CD4-positive, alpha-beta T cell (primary cell): ENCODE measurements at regions of chr17 and their contacts with region 1.

Region 1: DNA sequence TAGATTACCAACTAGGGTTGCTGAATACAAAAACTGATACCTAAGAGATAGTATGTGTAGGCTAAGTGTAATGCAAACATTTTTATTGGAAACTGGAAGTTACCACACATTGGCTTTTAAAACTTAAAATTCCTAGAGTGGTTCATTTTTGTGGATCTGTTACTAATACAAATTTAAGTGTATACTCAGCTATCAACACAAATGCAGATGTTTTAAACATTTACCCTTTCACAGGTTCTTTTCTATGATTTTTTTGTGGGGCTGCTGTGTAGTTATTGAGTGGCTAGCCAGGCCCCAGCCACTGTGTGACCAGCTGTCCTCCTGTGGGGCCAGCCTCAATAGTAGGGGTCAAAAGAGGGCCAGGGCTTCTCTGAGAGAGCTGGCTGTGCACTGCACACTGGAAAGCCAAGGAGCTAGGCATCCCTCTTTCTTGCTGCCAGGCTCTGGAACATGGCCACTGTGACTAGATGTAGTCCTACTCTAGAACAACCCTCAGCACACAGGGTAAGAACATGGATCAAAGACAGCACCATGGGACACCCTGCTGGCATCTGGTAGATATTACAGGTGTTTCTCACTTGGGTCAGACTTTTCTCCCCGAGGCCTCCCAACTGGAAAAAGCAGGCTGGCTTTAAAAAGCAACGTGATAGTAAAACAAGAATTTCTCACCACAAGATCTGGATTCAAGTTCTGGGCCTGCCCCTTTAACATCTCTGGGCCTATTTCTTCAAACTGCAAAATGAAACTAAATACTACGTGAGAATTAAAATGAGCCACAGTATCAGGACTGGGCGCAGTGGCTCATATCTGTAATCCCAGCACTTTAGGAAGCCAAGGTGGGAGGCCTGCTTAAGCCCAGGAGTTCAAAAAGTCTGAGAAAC is 7.3 kb upstream of the VEZF1 start:
- DNase-seq: peak; percentile 27 to 81 (median 41)
- ATAC-seq: peak; percentile 89
- H3K4me3 ChIP-seq: no peak overlapping the region
- H3K4me3 Mint-ChIP-seq: peak overlapping the region; percentile 25
- H3K27ac ChIP-seq: peak overlapping the region; percentile 9 to 12
- H3K27ac Mint-ChIP-seq: peak overlapping the region; percentile 37
- H3K4me1 ChIP-seq: peaks cover 15% of the 10 kb centered on the region
- H3K4me1 Mint-ChIP-seq: peaks cover 56% of the 10 kb centered on the region
- H3K27me3 ChIP-seq: no peaks in the 10 kb centered on the region
- H3K27me3 Mint-ChIP-seq: no peaks in the 10 kb centered on the region
- CTCF ChIP-seq: peak; percentile 73

Region 2: GRCh38 chr17:57255776-57256681 is 739.3 kb before region 1 on chr17 and contains the start of gene MSI2:
- CTCF ChIA-PET with region 1: no interaction called
- POLR2A ChIA-PET with region 1: no interaction called
- intact Hi-C with region 1: loop called (anchors 10 kb)
- DNase-seq: peak; percentile 82 to 96 (median 90)
- ATAC-seq: peak; percentile 71
- H3K4me3 ChIP-seq: peak within 1 kb of the TSS; percentile 74
- H3K4me3 Mint-ChIP-seq: peak within 1 kb of the TSS; percentile 99
- H3K27ac ChIP-seq: peak within 1 kb of the TSS; percentile 72 to 82
- H3K27ac Mint-ChIP-seq: peak within 1 kb of the TSS; percentile 98
- H3K4me1 ChIP-seq: peaks cover 35% of the 10 kb centered on the region
- H3K4me1 Mint-ChIP-seq: peaks cover 48% of the 10 kb centered on the region
- H3K27me3 ChIP-seq: no peaks in the 10 kb centered on the region
- H3K27me3 Mint-ChIP-seq: no peaks in the 10 kb centered on the region
- CTCF ChIP-seq: no peak
- total RNA-seq, gene MSI2: 129 to 132 TPM

Region 3: GRCh38 chr17:57892146-57892828 is 103.0 kb before region 1 on chr17:
- CTCF ChIA-PET with region 1: interaction called, 21 read pairs
- POLR2A ChIA-PET with region 1: interaction called, 4 read pairs
- intact Hi-C with region 1: loop called (anchors 1 kb)
- DNase-seq: peak; percentile 57 to 85 (median 75)
- ATAC-seq: peak; percentile 94
- H3K4me3 ChIP-seq: no peak overlapping the region
- H3K4me3 Mint-ChIP-seq: no peak overlapping the region
- H3K27ac ChIP-seq: no peak overlapping the region
- H3K27ac Mint-ChIP-seq: no peak overlapping the region
- H3K4me1 ChIP-seq: peaks cover 11% of the 10 kb centered on the region
- H3K4me1 Mint-ChIP-seq: peaks cover 6% of the 10 kb centered on the region
- H3K27me3 ChIP-seq: peaks cover 0 to 2% of the 10 kb centered on the region in 2 experiments
- H3K27me3 Mint-ChIP-seq: peaks cover 6% of the 10 kb centered on the region
- CTCF ChIP-seq: peak; percentile 90

Region 4: DNA sequence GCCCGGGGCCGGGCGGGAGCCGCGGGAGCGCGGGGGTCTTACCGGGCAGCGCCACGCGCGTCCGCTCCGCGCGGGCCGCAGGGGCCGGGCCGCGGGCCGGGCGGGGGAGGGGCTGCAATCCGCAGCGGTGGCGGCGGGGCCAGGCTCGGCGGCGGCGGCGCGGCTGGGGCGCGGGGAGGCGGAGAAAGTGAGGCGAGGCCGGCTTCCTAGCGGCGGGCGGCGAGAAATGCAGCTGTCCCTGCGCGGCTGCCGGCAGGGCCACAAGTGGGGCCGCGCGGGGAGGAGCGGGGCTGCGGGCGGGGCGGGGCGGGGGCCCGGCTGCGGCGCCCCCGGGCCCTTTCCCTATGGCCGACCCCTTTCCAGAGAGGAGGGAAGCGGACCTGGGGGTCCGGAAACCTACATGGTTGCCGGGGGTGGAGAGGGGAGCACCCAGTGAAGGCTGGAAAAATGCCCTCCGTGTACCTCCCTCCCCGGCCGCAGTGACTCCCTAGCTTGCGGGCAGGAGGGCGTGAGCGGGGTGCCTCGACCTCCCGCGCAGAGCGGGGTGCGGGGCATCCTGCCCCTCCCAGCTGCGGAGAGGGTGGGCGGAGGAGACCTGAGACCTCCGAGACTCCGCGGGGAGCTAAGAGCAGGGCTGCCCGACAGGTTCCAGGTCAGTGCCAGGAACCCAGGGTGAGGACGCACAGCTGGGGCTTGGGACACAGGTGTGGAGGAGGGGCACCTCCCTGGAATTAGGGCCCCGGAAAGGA is 40.0 kb before region 1 on chr17 and contains the start of gene CUEDC1:
- CTCF ChIA-PET with region 1: interaction called, 4 read pairs
- POLR2A ChIA-PET with region 1: interaction called, 12 read pairs
- intact Hi-C with region 1: no loop called
- DNase-seq: peak; percentile 38 to 81 (median 57)
- ATAC-seq: peak; percentile 82
- H3K4me3 ChIP-seq: peak within 1 kb of the TSS; percentile 57
- H3K4me3 Mint-ChIP-seq: peak within 1 kb of the TSS; percentile 86
- H3K27ac ChIP-seq: no peak within 1 kb of the TSS
- H3K27ac Mint-ChIP-seq: no peak within 1 kb of the TSS
- H3K4me1 ChIP-seq: peaks cover 19% of the 10 kb centered on the region
- H3K4me1 Mint-ChIP-seq: peaks cover 25% of the 10 kb centered on the region
- H3K27me3 ChIP-seq: peaks cover 9 to 13% of the 10 kb centered on the region in 2 experiments
- H3K27me3 Mint-ChIP-seq: peaks cover 40% of the 10 kb centered on the region
- CTCF ChIP-seq: no peak
- total RNA-seq, gene CUEDC1: 0.41 to 1.0 TPM

Region 5: GRCh38 chr17:57965521-57966160 is 29.7 kb before region 1 on chr17:
- CTCF ChIA-PET with region 1: no interaction called
- POLR2A ChIA-PET with region 1: no interaction called
- intact Hi-C with region 1: no loop called
- DNase-seq: no peak
- ATAC-seq: no peak
- H3K4me3 ChIP-seq: no peak overlapping the region
- H3K4me3 Mint-ChIP-seq: no peak overlapping the region
- H3K27ac ChIP-seq: no peak overlapping the region
- H3K27ac Mint-ChIP-seq: no peak overlapping the region
- H3K4me1 ChIP-seq: no peaks in the 10 kb centered on the region
- H3K4me1 Mint-ChIP-seq: no peaks in the 10 kb centered on the region
- H3K27me3 ChIP-seq: no peaks in the 10 kb centered on the region
- H3K27me3 Mint-ChIP-seq: peaks cover 4% of the 10 kb centered on the region
- CTCF ChIP-seq: no peak

Region 6: DNA sequence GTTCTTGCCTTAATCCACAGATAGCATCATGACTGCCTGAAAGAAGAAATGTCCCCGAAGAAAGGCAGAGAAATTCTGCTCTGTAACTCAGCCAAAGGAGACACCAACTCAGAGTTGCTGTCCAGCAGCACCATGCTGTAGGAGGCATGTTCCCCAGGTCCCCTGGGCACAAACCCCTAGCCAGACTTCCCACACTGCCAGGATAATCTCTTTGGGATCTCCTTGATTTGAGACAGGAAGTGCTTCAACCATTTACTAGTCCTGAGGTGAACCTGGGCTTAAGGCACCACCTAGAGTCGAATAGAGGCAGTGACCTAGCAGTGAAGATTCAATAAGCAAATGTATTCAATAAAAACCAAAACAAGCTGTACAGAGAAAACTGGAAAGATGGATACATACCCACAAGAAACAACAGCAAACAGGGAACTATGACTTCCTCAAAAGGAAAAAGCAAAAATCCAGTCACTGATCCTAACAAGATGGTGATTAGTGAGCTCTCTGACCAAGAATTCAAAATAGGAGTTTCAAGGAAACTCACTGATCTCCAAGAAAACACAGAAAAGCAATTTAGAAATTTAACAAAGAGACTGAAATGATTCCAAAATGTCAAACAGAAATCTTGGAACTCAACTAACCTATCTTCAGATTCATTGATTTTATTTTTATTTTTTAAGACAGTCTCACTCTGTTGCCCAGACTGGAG is 177.2 kb after region 1 on chr17:
- CTCF ChIA-PET with region 1: no interaction called
- POLR2A ChIA-PET with region 1: interaction called, 3 read pairs
- intact Hi-C with region 1: loop called in 1 of 2 experiments (anchors 5 kb)
- DNase-seq: peak in 13 of 14 experiments; percentile 16 to 81 (median 31)
- ATAC-seq: peak; percentile 90
- H3K4me3 ChIP-seq: peak overlapping the region; percentile 4
- H3K4me3 Mint-ChIP-seq: no peak overlapping the region
- H3K27ac ChIP-seq: peak overlapping the region in 1 of 2 donors; percentile 57
- H3K27ac Mint-ChIP-seq: peak overlapping the region; percentile 31
- H3K4me1 ChIP-seq: peaks cover 43% of the 10 kb centered on the region
- H3K4me1 Mint-ChIP-seq: peaks cover 47% of the 10 kb centered on the region
- H3K27me3 ChIP-seq: no peaks in the 10 kb centered on the region
- H3K27me3 Mint-ChIP-seq: peaks cover 3% of the 10 kb centered on the region
- CTCF ChIP-seq: peak; percentile 87